Transverse colon (tissue), 4 donors: ENCODE measurements at regions of chr16 and their contacts with region 1.

Region 1: DNA sequence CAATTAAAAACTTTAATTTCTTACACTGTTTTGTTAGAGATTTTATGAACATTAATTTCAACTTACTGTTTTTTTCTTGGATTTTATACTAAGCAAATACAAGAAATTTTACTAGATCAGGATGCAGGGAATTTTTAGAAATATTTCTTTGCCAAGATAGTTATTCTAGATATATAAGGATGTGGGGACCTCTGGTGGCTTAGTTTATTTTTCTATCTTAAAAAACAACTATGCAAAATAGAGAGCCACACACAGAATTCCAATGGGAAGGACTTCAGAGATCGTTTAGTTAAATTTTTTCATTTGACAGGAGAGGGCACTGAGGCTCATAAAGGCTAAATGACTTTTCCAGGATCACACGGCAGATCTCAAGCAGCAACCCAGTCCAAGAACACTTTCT is 23.0 kb upstream of the CAPNS2 start:
- DNase-seq: no peak
- H3K4me3 ChIP-seq: no peak overlapping the region
- H3K27ac ChIP-seq: no peak overlapping the region
- H3K4me1 ChIP-seq: no peaks in the 10 kb centered on the region
- H3K27me3 ChIP-seq: no peaks in the 10 kb centered on the region
- CTCF ChIP-seq: peak; percentile 29 to 43 (median 39)
- EP300 ChIP-seq: no peak
- POLR2A ChIP-seq: no peak

Region 2: DNA sequence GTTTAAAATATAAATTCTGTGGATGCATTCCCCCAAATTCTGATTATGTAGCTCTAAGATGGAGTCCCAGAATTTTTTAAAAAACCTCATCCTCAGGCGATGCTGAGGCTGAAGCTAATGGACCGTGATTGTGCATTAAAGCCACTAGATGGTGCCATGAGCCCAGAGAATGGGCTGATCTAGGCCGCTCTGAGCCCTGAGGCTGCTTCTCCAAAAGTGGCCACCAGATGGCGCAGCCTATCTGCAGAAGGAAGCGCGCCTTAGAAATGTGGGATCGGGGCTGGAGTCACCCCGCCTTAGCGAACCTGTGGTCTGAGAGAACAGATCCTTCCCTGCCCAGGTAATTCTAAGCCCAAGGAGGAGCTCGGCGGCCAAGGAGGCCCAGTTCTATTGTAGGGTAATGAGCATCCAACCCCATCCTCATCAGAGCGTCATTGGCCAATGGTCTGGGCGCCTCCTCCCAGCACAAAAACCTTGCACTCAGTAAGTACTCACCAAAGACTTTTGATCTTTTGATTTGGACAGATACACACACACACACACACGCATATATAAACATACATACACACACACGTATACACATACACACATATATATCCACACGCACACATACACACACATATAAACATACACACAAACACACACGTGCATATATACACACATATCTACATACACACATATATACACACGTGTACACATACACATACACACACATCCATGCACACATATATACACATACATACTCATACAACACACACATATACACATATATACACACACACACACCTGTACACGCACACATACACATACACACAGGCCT is 78.2 kb before region 1 on chr16:
- in situ Hi-C with region 1: loop called in 2 of 4 experiments (anchors 5 to 10 kb)
- intact Hi-C with region 1: loop called (anchors 5 kb)
- DNase-seq: peak; percentile 91
- H3K4me3 ChIP-seq: no peak overlapping the region
- H3K27ac ChIP-seq: no peak overlapping the region
- H3K4me1 ChIP-seq: peaks cover 0 to under 1% (median 0%) of the 10 kb centered on the region in 4 donors
- H3K27me3 ChIP-seq: no peaks in the 10 kb centered on the region
- CTCF ChIP-seq: peak; percentile 99 to 100 (median 100)
- EP300 ChIP-seq: no peak
- POLR2A ChIP-seq: no peak

Region 3: GRCh38 chr16:55508941-55509931 is 34.2 kb before region 1 on chr16 and contains the start of gene LPCAT2:
- in situ Hi-C with region 1: no loop called
- intact Hi-C with region 1: loop called (anchors 5 kb)
- DNase-seq: peak; percentile 86
- H3K4me3 ChIP-seq: peak within 1 kb of the TSS; percentile 43 to 63 (median 58)
- H3K27ac ChIP-seq: peak within 1 kb of the TSS; percentile 63 to 81 (median 76)
- H3K4me1 ChIP-seq: peaks cover 0 to 14% (median 11%) of the 10 kb centered on the region in 4 donors
- H3K27me3 ChIP-seq: no peaks in the 10 kb centered on the region
- CTCF ChIP-seq: no peak
- EP300 ChIP-seq: no peak
- POLR2A ChIP-seq: peak; percentile 70
- total RNA-seq, gene LPCAT2: 1.6 to 11.6 (median 6.2) TPM

Region 4: DNA sequence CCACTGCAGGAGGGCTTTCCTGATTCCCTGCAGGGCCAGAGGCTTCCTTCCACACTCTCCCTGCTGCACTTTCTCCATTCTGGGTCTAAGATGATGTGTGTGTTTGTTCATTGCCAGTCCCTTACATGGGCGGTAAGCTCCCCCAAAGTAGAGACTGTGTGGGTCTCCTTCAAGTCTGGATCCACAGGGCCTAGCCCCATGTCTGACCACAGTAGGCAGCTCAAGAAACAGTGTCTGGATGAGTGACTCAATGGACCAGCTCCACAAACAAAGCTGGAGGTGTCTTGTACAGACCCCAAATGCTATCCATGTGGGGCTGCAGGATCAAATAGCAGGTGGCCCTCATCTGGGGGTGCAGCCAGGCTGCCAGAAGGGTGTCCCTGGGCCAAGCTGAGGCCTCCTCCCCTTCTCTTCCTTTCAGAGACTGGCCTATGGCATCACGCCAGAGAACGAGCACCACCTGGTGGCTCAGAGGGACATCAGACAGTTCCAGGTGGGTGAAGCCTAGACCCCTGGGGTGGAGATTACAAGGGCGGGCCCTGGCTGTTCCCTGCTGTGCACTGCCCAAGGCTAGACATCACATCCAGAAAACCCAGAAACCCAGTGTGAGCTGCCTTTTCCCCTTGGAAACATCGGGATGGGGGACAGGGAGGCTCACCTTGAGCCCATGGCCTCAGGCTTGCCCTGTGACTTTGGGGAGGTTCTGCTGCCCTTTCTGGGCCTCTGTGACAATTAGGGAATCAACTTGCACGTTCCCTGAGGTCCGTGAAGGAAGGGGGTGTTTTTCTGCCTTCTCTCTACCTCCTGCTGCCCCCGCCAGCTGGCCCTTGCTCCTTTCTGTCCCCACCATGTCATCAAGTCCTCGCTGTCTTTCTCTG is 158.2 kb after region 1 on chr16:
- in situ Hi-C with region 1: loop called in 1 of 4 experiments (anchors 10 kb)
- intact Hi-C with region 1: no loop called
- DNase-seq: peak; percentile 54
- H3K4me3 ChIP-seq: no peak overlapping the region
- H3K27ac ChIP-seq: no peak overlapping the region
- H3K4me1 ChIP-seq: no peaks in the 10 kb centered on the region
- H3K27me3 ChIP-seq: no peaks in the 10 kb centered on the region
- CTCF ChIP-seq: peak; percentile 48 to 56 (median 53)
- EP300 ChIP-seq: no peak
- POLR2A ChIP-seq: no peak